ENCODE measurements at regions of chr12 and their contacts with region 1.

Region 1: DNA sequence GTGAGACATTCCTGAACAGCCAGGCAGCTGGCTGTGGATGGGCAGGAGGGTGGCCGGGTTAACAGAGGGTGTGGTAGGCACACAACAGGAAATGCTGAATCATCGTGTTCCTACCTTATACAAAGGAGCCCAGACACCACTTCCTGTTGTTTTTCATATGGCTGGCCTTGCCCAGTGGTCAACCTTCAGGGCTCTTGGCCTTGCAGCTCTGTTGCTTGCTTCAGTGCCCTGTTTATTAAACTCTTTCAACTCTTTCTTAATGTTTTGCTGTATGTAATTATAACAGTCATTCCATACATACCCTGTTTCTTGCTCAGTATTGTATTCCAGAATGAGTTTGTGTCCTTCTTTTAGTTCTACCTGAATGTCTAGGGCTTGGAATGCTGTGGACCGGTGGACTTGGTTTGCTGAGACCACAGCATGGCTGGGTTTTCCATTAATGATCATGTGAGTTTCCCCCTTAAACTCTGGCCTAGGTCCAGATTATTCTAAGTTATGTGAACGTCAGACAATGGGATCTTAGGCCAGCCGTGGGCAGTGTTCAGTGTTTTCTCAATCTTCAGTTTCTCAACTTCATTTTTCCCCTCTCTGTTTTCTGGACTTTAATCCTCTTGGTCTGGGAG is 11.9 kb downstream of the CFAP54 start:
- DNase-seq: peak; percentile 77 to 84
- ATAC-seq: peak; percentile 76 to 93; a peak in 4 of 6 replicates
- H3K4me3 ChIP-seq: no peak overlapping the region
- H3K27ac ChIP-seq: peak overlapping the region; percentile 65 to 84
- H3K4me1 ChIP-seq: peaks cover 17% of the 10 kb centered on the region
- CTCF ChIP-seq: no peak
- EP300 ChIP-seq: no peak
- POLR2A ChIP-seq: no peak
- RAD21 ChIP-seq: no peak

Region 2: GRCh38 chr12:96516472-96517430 is 15.5 kb after region 1 on chr12:
- CTCF ChIA-PET with region 1: interaction called, 18 read pairs
- POLR2A ChIA-PET with region 1: interaction called, 4 read pairs
- DNase-seq: peak; percentile 56 to 84
- ATAC-seq: peak; percentile 80 to 90; a peak in 5 of 6 replicates
- H3K4me3 ChIP-seq: no peak overlapping the region
- H3K27ac ChIP-seq: no peak overlapping the region
- H3K4me1 ChIP-seq: peaks cover 9% of the 10 kb centered on the region; the same call in 1 of the 3 replicates
- CTCF ChIP-seq: peak; percentile 90
- EP300 ChIP-seq: no peak
- POLR2A ChIP-seq: no peak
- RAD21 ChIP-seq: peak; percentile 94 to 95

Measured in A549 (cell line).